Activated naive CD4-positive, alpha-beta T cell treated with anti-CD3 and anti-CD28 coated beads for 36 hours (primary cell): ENCODE measurements at regions of chr2 and their contacts with region 1.

Region 1: GRCh38 chr2:174492963-174493431 is 6.2 kb upstream of the GPR155 start:
- DNase-seq: peak; percentile 83
- H3K4me3 Mint-ChIP-seq: peak overlapping the region; percentile 69
- H3K27ac Mint-ChIP-seq: peak overlapping the region; percentile 96
- H3K4me1 Mint-ChIP-seq: peaks cover 74% of the 10 kb centered on the region
- H3K27me3 Mint-ChIP-seq: no peaks in the 10 kb centered on the region

Region 2: GRCh38 chr2:174428214-174428613 is 64.8 kb before region 1 on chr2:
- CTCF ChIA-PET with region 1: no interaction called
- intact Hi-C with region 1: no loop called
- DNase-seq: no peak
- H3K4me3 Mint-ChIP-seq: no peak overlapping the region
- H3K27ac Mint-ChIP-seq: no peak overlapping the region
- H3K4me1 Mint-ChIP-seq: no peaks in the 10 kb centered on the region
- H3K27me3 Mint-ChIP-seq: no peaks in the 10 kb centered on the region

Region 3: DNA sequence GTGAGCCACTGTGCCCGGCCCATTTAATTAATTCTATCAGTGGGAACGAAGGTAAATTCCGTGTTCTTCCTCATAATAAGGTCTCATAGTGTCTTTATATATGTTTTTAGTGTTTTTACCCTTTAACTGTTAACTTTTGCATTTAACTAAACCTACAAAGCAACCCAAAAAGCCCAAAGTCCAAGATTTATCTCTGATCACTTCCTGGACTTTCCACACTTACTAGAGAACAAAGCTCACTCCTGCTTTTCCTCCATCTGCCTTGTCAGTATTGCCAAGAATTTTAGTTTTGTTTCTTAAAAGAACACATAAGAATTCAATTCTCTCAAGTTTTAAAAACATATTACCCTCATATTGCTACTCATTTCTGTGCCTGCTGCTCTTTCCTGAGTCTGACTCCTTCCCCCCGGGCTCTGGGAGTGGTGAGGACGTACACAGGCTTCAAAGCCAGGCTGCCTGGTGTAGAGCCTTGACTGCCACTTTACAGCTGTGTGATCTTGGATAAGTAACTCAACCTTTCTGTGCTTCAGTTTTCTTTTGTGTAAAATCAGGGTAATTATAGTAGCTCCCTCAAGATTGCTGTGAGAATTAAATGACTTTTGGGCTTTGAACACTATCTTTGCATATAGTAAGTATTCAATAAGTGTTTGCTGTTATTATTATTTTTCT is 18.7 kb after region 1 on chr2:
- CTCF ChIA-PET with region 1: interaction called, 3 read pairs
- intact Hi-C with region 1: loop called (anchors 2 kb)
- DNase-seq: no peak
- H3K4me3 Mint-ChIP-seq: no peak overlapping the region
- H3K27ac Mint-ChIP-seq: no peak overlapping the region
- H3K4me1 Mint-ChIP-seq: peaks cover 21% of the 10 kb centered on the region
- H3K27me3 Mint-ChIP-seq: no peaks in the 10 kb centered on the region

Region 4: GRCh38 chr2:174546581-174547506 is 53.8 kb after region 1 on chr2:
- CTCF ChIA-PET with region 1: interaction called, 15 read pairs
- intact Hi-C with region 1: no loop called
- DNase-seq: peak; percentile 74
- H3K4me3 Mint-ChIP-seq: no peak overlapping the region
- H3K27ac Mint-ChIP-seq: peak overlapping the region; percentile 3
- H3K4me1 Mint-ChIP-seq: peaks cover 9% of the 10 kb centered on the region
- H3K27me3 Mint-ChIP-seq: no peaks in the 10 kb centered on the region

Region 5: GRCh38 chr2:174603280-174603679 is 110.3 kb after region 1 on chr2:
- CTCF ChIA-PET with region 1: interaction called, 3 read pairs
- intact Hi-C with region 1: loop called (anchors 1 kb)
- DNase-seq: peak; percentile 85
- H3K4me3 Mint-ChIP-seq: no peak overlapping the region
- H3K27ac Mint-ChIP-seq: peak overlapping the region; percentile 76
- H3K4me1 Mint-ChIP-seq: peaks cover 81% of the 10 kb centered on the region
- H3K27me3 Mint-ChIP-seq: no peaks in the 10 kb centered on the region

Region 6: DNA sequence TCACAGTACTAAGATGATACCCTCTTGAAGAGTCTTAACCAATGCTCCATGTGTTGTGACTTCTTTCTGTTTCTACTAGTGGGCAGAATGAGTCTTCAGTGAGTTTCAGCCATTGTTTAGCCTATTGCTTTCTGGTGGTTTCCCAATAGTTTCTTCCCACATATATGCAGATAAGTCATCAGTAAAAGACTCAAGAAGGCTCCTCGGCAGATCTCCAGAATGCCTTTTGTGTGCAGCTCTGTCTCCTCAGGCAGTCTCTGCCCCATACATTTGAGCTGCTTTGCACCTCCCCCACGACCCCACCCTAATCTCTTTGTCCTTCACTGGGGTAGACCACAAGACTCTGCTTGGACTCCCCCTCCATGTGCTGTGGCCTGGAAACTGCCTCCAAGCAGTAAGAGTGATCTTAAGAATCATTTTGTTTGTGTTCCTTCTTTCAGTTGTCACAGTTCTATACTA is 342.8 kb after region 1 on chr2:
- CTCF ChIA-PET with region 1: no interaction called
- intact Hi-C with region 1: loop called (anchors 10 kb)
- DNase-seq: peak; percentile 38
- H3K4me3 Mint-ChIP-seq: peak overlapping the region; percentile 36
- H3K27ac Mint-ChIP-seq: peak overlapping the region; percentile 71
- H3K4me1 Mint-ChIP-seq: peaks cover 32% of the 10 kb centered on the region
- H3K27me3 Mint-ChIP-seq: no peaks in the 10 kb centered on the region